Endothelial cell of umbilical vein (primary cell): ENCODE measurements at regions of chr7 and their contacts with region 1.

Region 1: GRCh38 chr7:75642810-75643486 is 95.8 kb downstream of the HIP1 start:
- DNase-seq: peak; percentile 56
- H3K4me3 ChIP-seq: no peak overlapping the region
- H3K27ac ChIP-seq: no peak overlapping the region
- H3K4me1 ChIP-seq: peaks cover 9% of the 10 kb centered on the region
- H3K27me3 ChIP-seq: no peaks in the 10 kb centered on the region
- CTCF ChIP-seq: peak; percentile 80 to 83
- POLR2A ChIP-seq: no peak

Region 2: DNA sequence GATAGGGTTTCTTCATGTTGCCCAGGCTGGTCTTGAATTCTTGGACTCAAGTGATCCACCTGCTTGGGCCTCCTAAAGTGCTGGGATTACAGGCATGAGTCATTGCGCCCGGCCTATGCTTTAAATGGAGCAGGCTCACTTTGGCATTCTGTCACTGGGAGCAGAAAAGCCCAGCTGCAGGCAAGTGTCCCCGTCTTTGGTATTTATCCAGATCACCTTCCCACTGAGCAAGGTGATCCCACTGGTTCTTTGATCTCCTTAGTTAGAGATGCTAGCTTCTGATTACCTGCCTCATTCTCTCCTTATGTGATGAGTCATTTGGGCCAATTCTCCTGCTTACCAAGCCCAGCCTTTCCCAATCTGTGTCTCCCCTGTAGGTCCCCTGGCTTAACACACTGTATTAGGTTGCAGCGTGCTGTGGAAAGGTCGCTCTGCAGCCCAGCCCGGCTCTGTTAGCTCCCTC is 111.6 kb before region 1 on chr7:
- CTCF ChIA-PET with region 1: no interaction called
- POLR2A ChIA-PET with region 1: no interaction called
- dilution Hi-C with region 1: no loop called
- intact Hi-C with region 1: loop called (anchors 10 kb)
- DNase-seq: no peak
- H3K4me3 ChIP-seq: no peak overlapping the region
- H3K27ac ChIP-seq: no peak overlapping the region
- H3K4me1 ChIP-seq: peaks cover 3% of the 10 kb centered on the region
- H3K27me3 ChIP-seq: no peaks in the 10 kb centered on the region
- CTCF ChIP-seq: no peak
- POLR2A ChIP-seq: no peak

Region 3: DNA sequence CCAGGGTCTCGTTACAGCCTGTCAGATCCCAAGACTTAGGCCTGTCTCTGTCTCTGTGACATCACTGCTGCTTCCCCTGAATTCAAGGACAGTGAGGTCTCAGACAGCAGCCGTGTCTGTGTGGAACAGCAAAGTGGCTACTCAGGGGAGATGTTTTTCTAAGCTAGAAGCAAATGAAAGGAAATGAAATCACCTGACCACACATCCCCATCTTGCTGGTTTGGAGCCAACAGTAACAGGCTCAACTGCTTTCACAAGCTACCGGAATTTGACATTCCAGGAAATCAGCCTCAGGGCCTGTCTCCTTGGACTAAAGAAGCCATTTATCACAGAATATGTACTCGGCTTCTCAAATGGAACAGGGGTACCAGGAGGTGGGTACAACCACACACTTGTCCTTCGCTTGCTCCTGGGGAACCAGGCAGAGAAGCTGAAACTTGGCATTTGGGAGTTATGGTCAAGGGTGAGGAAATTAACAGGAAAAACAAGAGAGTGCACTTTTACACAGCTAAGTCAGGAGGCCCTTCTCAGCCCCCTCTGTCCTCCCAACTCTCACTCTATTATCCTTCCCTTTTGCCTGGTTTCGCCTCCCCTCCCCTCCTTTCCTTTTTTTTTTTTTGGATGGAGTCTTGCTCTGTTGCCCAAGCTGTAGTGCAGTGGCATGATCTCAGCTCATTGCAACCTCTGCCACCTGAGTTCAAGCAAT is 77.7 kb before region 1 on chr7:
- CTCF ChIA-PET with region 1: interaction called, 4 read pairs
- POLR2A ChIA-PET with region 1: no interaction called
- dilution Hi-C with region 1: no loop called
- intact Hi-C with region 1: loop called (anchors 1 kb)
- DNase-seq: peak; percentile 96
- H3K4me3 ChIP-seq: no peak overlapping the region
- H3K27ac ChIP-seq: peak overlapping the region; percentile 91
- H3K4me1 ChIP-seq: peaks cover 20% of the 10 kb centered on the region
- H3K27me3 ChIP-seq: no peaks in the 10 kb centered on the region
- CTCF ChIP-seq: no peak
- POLR2A ChIP-seq: peak; percentile 44

Region 4: GRCh38 chr7:75599244-75599781 is 43.6 kb before region 1 on chr7:
- CTCF ChIA-PET with region 1: no interaction called
- POLR2A ChIA-PET with region 1: no interaction called
- dilution Hi-C with region 1: no loop called
- intact Hi-C with region 1: loop called (anchors 2 kb)
- DNase-seq: peak; percentile 85
- H3K4me3 ChIP-seq: no peak overlapping the region
- H3K27ac ChIP-seq: peak overlapping the region; percentile 74
- H3K4me1 ChIP-seq: peaks cover 30% of the 10 kb centered on the region
- H3K27me3 ChIP-seq: no peaks in the 10 kb centered on the region
- CTCF ChIP-seq: peak in 1 of 2 donors; percentile 2
- POLR2A ChIP-seq: no peak

Region 5: GRCh38 chr7:75679060-75679459 is 36.1 kb after region 1 on chr7:
- CTCF ChIA-PET with region 1: no interaction called
- POLR2A ChIA-PET with region 1: no interaction called
- dilution Hi-C with region 1: no loop called
- intact Hi-C with region 1: no loop called
- DNase-seq: no peak
- H3K4me3 ChIP-seq: no peak overlapping the region
- H3K27ac ChIP-seq: no peak overlapping the region
- H3K4me1 ChIP-seq: no peaks in the 10 kb centered on the region
- H3K27me3 ChIP-seq: no peaks in the 10 kb centered on the region
- CTCF ChIP-seq: no peak
- POLR2A ChIP-seq: no peak

Region 6: GRCh38 chr7:75738987-75739795 is 96.2 kb after region 1 on chr7:
- CTCF ChIA-PET with region 1: no interaction called
- POLR2A ChIA-PET with region 1: interaction called, 3 read pairs
- dilution Hi-C with region 1: no loop called
- intact Hi-C with region 1: loop called (anchors 2 kb)
- DNase-seq: peak; percentile 97
- H3K4me3 ChIP-seq: peak overlapping the region; percentile 54 to 99 (median 91)
- H3K27ac ChIP-seq: peak overlapping the region; percentile 55
- H3K4me1 ChIP-seq: peaks cover 6% of the 10 kb centered on the region
- H3K27me3 ChIP-seq: no peaks in the 10 kb centered on the region
- CTCF ChIP-seq: no peak
- POLR2A ChIP-seq: no peak

Region 7: GRCh38 chr7:75756991-75757676 is 114.2 kb after region 1 on chr7:
- CTCF ChIA-PET with region 1: interaction called, 10 read pairs
- POLR2A ChIA-PET with region 1: no interaction called
- dilution Hi-C with region 1: no loop called
- intact Hi-C with region 1: loop called (anchors 5 kb)
- DNase-seq: peak; percentile 64
- H3K4me3 ChIP-seq: no peak overlapping the region
- H3K27ac ChIP-seq: no peak overlapping the region
- H3K4me1 ChIP-seq: no peaks in the 10 kb centered on the region
- H3K27me3 ChIP-seq: no peaks in the 10 kb centered on the region
- CTCF ChIP-seq: peak; percentile 41 to 54
- POLR2A ChIP-seq: no peak

Region 8: DNA sequence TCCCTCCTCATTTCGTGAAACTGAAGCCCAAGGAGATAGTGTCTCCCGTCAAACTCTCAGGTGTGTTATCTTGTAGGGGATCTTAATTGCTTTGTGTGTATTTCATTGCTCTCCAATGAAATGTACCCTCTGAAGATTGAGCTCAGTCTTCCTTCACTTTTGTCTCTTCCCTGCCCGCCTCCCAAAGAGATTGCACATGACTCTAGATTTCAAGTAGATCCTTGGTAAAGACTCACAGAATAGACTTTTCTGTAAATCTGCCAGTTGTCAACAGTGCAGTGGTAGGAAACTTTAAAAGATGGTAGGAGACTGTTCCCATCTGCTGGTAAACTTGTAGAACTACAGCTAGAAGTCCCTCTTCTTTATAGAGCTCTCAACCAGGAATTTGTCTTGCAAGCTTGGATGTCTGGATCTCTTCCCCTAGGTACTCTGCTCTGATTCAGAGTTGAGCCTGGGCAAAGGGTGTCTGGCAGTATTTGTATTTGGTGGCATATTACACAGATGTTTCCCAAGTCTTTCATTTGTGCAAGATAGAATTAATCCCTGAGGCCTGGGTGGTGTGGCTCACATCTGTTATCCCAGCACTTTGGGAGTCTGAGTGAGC is 119.5 kb after region 1 on chr7:
- CTCF ChIA-PET with region 1: interaction called, 10 read pairs
- POLR2A ChIA-PET with region 1: no interaction called
- dilution Hi-C with region 1: no loop called
- intact Hi-C with region 1: loop called (anchors 5 kb)
- DNase-seq: peak; percentile 58
- H3K4me3 ChIP-seq: no peak overlapping the region
- H3K27ac ChIP-seq: no peak overlapping the region
- H3K4me1 ChIP-seq: no peaks in the 10 kb centered on the region
- H3K27me3 ChIP-seq: no peaks in the 10 kb centered on the region
- CTCF ChIP-seq: peak; percentile 58 to 60
- POLR2A ChIP-seq: no peak